Adrenal gland (tissue), 19 donors: ENCODE measurements at regions of chr10 and their contacts with region 1.

Region 1: GRCh38 chr10:22003079-22003913 is at the start of gene DNAJC1:
- DNase-seq: peak; percentile 97 to 99 (median 99)
- H3K4me3 ChIP-seq: peak within 1 kb of the TSS; percentile 20 to 91 (median 58)
- H3K27ac ChIP-seq: peak within 1 kb of the TSS; percentile 42 to 99 (median 97)
- H3K4me1 ChIP-seq: peaks cover 8 to 16% of the 10 kb centered on the region in 2 donors
- H3K27me3 ChIP-seq: no peaks in the 10 kb centered on the region
- CTCF ChIP-seq: peak in 2 of 6 experiments; percentile 25 to 27
- POLR2A ChIP-seq: peak; percentile 63 to 97
- total RNA-seq, gene DNAJC1: 26.4 to 84.4 (median 38.6) TPM

Region 2: DNA sequence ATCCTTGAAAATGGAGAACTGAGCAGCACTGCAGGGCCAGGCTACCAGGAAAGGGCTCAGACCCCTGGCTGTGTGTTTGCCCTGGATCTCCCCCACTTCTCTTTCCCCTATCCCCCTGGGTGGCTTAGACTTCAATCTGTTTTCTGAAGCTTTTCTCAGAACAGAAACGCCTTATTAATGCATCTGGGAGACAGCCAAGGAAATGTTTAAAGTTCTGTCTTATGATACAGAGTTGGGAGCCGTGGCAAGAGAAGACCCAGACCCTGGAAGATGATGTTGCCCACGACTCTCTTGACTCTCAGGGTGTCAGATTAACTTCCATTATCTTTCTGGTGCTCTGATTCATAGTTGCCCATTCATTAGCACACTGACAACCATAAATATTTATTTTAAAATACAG is 107.5 kb after region 1 on chr10:
- intact Hi-C with region 1: no loop called
- DNase-seq: no peak
- H3K4me3 ChIP-seq: no peak overlapping the region
- H3K27ac ChIP-seq: no peak overlapping the region
- H3K4me1 ChIP-seq: no peaks in the 10 kb centered on the region
- H3K27me3 ChIP-seq: no peaks in the 10 kb centered on the region
- CTCF ChIP-seq: no peak
- POLR2A ChIP-seq: no peak

Region 3: GRCh38 chr10:22228943-22229801 is 225.9 kb after region 1 on chr10:
- intact Hi-C with region 1: loop called in 1 of 2 experiments (anchors 10 kb)
- DNase-seq: peak; percentile 82 to 93 (median 86)
- H3K4me3 ChIP-seq: peak overlapping the region; percentile 13 to 76 (median 42)
- H3K27ac ChIP-seq: peak overlapping the region; percentile 2 to 90 (median 82)
- H3K4me1 ChIP-seq: peaks cover 0 to 7% of the 10 kb centered on the region in 2 donors
- H3K27me3 ChIP-seq: no peaks in the 10 kb centered on the region
- CTCF ChIP-seq: no peak
- POLR2A ChIP-seq: peak; percentile 14 to 50

Region 4: DNA sequence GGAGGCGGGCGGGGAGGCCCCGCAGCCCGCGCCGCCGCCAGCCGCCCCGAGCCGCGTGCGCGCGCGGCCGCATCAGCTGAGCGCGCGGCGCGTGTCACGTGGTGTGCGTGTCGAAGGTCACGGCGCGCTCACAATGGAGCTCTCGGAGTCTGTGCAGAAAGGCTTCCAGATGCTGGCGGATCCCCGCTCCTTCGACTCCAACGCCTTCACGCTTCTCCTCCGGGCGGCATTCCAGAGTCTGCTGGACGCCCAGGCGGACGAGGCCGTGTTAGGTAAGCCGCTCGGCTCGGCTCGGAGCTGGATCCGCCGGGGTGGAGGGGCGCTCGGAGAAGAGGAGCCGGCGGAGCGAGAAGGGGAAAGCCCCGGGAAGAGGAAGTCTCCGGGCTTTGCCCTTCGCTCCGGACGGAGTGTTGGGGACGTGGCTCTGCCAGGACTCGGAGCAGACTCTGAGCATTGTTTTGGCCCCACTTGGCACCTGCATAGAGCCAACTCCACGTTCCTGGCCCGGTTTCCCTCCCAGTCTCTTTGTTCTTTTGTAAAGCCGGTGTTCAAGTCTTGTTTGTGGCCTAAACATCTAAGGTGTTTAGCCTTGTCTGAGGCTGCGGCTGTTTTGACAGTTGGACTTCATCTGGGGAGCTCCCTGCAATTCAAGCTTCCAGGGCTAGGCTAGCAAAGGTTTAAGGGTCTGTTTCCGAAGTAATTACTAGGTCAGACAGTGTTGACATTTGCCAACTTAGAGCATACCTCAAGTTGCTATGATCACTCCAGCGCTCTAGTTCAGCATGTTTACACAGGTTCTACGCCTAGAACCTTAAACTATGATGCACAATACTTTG is 313.2 kb after region 1 on chr10 and contains the start of gene COMMD3:
- intact Hi-C with region 1: loop called in 1 of 2 experiments (anchors 10 kb)
- DNase-seq: peak; percentile 82 to 93 (median 88)
- H3K4me3 ChIP-seq: peak within 1 kb of the TSS; percentile 31 to 92 (median 72)
- H3K27ac ChIP-seq: peak within 1 kb of the TSS; percentile 74 to 96 (median 90)
- H3K4me1 ChIP-seq: peaks cover 0 to 22% of the 10 kb centered on the region in 2 donors
- H3K27me3 ChIP-seq: peaks cover 5% of the 10 kb centered on the region
- CTCF ChIP-seq: no peak
- POLR2A ChIP-seq: peak; percentile 46 to 86
- total RNA-seq, gene COMMD3: 7.5 to 70.5 (median 45.1) TPM

Region 5: GRCh38 chr10:22436884-22437619 is 433.8 kb after region 1 on chr10:
- intact Hi-C with region 1: loop called in 1 of 2 experiments (anchors 10 kb)
- DNase-seq: peak; percentile 83 to 95 (median 86)
- H3K4me3 ChIP-seq: peak overlapping the region; percentile 31 to 79 (median 67)
- H3K27ac ChIP-seq: peak overlapping the region; percentile 89 to 98 (median 90)
- H3K4me1 ChIP-seq: peaks cover 11 to 13% of the 10 kb centered on the region in 2 donors
- H3K27me3 ChIP-seq: no peaks in the 10 kb centered on the region
- CTCF ChIP-seq: peak in 1 of 6 experiments; percentile 9
- POLR2A ChIP-seq: peak; percentile 86 to 92

Region 6: GRCh38 chr10:22997102-22997501 is 993.8 kb after region 1 on chr10:
- intact Hi-C with region 1: loop called in 1 of 2 experiments (anchors 10 kb)
- DNase-seq: no peak
- H3K4me3 ChIP-seq: no peak overlapping the region
- H3K27ac ChIP-seq: no peak overlapping the region
- H3K4me1 ChIP-seq: no peaks in the 10 kb centered on the region
- H3K27me3 ChIP-seq: peaks cover 20% of the 10 kb centered on the region
- CTCF ChIP-seq: no peak
- POLR2A ChIP-seq: no peak